A673 (cell line): ENCODE measurements at regions of chr4 and their contacts with region 1.

Region 1: GRCh38 chr4:150632639-150633038 is 50.7 kb downstream of the MAB21L2 start:
- DNase-seq: no peak
- H3K4me3 ChIP-seq: no peak overlapping the region
- H3K27ac ChIP-seq: no peak overlapping the region
- H3K4me1 ChIP-seq: peaks cover 7% of the 10 kb centered on the region
- H3K27me3 ChIP-seq: no peaks in the 10 kb centered on the region
- CTCF ChIP-seq: no peak

Region 2: DNA sequence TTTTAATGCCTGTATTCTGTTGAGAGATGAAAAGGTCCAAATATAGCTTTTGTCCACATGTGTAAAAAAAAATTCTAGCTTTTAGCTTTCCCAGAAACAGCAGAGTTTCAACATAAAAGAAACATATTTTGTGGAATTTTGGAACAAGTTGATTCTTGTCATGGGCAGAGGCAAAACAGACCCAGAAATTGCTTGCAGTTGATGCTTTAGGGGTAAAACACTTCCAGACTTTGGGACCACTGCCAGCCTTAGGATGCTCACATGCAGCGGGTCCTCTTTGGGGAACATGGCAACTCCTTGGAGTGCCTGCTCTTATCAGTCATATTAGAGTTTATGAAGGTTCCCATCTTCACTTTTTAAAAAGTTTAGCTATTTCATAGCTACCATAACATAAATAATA is 523.9 kb before region 1 on chr4:
- CTCF ChIA-PET with region 1: interaction called, 11 read pairs
- POLR2A ChIA-PET with region 1: no interaction called
- intact Hi-C with region 1: no loop called
- DNase-seq: no peak
- H3K4me3 ChIP-seq: no peak overlapping the region
- H3K27ac ChIP-seq: no peak overlapping the region
- H3K4me1 ChIP-seq: no peaks in the 10 kb centered on the region
- H3K27me3 ChIP-seq: no peaks in the 10 kb centered on the region
- CTCF ChIP-seq: no peak